ENCODE measurements at regions of chr9 and their contacts with region 1.

Region 1: DNA sequence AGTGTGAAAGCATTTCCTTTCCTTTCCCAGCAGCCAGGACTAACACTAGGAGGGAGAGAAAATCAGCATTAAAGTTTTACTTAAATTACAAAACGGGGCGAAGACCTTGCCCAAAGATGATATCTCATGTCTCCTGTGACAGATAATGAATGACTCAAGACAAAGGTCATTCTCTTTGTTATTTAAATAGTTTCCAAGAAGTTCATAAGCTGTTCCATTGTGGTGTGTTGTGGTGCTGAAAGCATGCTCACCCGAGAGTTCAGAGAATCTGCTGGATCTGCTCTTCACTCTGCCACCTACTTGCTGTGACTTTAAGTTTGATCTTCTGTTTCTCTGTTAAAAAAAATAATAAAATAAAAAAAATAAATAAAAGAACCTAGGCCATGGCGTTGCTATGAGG is 265.9 kb upstream of the NR4A3 start:
- DNase-seq: no peak

Region 2: DNA sequence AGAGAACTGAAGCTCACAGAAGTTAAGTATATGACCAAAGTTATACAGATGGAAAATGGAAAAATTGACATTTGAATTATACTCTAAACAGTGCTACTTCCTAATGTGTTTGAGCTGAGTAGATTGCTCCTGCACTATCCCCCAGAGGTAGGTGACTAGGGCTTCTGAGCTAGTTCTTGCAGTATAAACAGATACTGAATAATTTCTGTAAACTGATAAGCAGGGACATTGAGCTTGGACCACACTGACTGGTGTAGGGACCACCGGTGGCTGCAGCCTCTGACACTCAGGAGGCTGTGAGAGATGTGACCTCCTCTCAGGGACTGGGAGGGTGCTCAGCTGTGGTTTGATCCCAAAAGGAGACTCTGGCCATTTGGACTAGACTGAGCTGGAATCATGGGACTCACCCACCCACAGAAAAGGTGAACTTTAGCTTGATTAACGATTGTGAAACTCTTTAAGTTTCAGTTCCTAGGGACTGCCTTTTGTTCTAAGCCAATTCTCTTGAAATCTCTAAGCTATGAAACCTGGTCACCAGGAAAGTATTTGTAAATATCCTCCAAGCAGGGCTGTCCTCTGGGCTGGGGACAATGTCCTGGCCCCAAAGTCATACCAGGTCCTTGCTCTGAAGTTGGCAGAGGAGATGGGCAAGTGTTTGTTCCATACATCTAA is 42.2 kb before region 1 on chr9:
- intact Hi-C with region 1: no loop called
- DNase-seq: no peak

Region 3: DNA sequence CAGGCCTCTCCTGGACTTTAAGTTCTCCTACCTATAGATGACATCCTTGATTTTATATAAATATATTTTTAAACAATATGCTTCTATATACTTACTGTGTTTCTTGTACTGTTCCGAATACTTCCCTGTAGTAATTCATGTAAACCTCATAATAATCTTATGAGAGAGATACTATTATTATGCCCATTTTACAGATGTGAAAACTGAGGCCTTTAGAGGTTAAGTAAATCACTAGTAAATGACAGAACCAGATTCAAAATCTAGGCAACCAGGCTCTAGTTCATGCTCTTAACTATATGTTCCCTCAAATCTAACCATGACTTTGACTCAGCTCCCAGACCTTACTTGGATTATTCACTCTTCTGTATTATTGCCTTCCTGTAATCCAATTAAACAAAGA is 22.9 kb after region 1 on chr9:
- intact Hi-C with region 1: loop called in 1 of 2 experiments (anchors 1 kb)
- DNase-seq: no peak

Measured in posterior vena cava (tissue), 2 donors.